Right ventricle myocardium inferior (tissue), 1 donor: ENCODE measurements at regions of chr4 and their contacts with region 1.

Region 1: DNA sequence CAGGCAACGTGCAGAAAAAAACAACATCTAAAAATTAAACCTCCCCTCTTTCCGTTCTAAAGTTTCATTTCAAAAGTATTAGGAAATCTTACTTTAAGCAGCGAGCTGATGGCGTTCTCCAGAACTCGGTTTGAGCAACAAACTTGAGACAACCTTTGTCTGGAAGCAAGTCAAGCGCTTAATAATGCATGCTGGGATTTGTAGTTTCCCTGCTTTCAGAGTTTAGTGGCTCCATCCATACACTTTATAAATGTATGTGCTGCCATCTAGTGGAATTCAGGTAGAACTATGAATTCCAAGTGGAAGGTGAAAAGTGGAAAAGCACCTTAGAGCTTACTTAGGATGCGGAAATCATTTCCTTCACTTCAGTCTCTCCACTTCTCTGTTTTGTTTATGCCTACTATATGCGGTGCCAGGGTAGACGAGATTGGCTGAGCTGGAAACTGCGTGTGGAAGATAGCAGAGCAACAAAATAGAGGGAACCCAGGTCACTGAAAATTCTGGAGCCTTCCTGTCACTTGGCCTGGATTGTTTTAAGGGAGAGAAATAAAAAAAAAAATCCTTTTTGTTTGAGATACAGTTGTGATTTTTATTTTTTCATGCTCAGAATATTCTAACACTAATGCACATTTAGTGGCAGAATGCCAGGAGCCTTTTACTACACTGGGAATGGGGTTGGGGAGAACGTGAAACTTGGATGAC is at the start of gene BDH2:
- DNase-seq: no peak
- ATAC-seq: peak; percentile 95
- total RNA-seq, gene BDH2: 25.4 TPM

Region 2: GRCh38 chr4:102449751-102450352 is 650.0 kb before region 1 on chr4:
- intact Hi-C with region 1: loop called (anchors 5 kb)
- DNase-seq: no peak
- ATAC-seq: peak; percentile 60

Region 3: GRCh38 chr4:102620697-102621497 is 478.9 kb before region 1 on chr4:
- intact Hi-C with region 1: loop called (anchors 5 kb)
- DNase-seq: no peak
- ATAC-seq: peak; percentile 93

Region 4: GRCh38 chr4:103019308-103020124 is 80.3 kb before region 1 on chr4 and contains the start of gene SLC9B1:
- intact Hi-C with region 1: loop called (anchors 10 kb)
- DNase-seq: peak; percentile 98
- ATAC-seq: peak; percentile 99
- total RNA-seq, gene SLC9B1: 0.95 TPM